ENCODE measurements at regions of chr2 and their contacts with region 1.

Region 1: DNA sequence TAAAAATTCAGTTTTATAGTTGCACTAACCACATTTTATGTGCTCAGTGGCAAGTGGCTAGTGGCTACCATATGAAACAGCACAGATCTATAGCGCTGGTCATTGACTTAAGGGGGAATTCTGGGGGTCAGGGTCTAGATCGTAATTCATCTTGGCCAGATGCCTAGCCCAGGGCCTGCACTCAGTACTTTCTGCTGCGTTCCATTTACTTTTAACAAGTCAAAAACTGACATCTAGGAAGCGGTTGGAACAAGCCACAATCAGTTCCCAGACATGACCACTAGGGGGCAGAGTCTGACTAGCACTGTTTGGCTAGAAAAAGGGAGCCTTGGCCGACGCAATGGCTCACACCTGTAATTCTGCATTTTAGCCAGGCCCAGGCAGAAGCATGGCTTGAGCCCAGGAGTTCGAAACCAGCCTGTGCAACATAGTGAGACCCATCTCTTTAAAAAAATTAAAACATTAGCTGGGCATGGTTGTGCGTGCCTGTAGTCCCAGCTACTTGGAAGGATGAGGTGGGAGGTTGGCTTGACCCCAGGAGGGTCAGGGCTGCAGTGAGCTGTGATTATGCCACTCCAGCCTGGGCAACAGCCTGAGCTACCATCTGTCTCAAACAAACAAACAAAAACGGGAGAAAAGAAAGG is 9.0 kb upstream of the TMBIM1 start:
- DNase-seq: peak; percentile 48 to 90
- ATAC-seq: peak; percentile 88 to 93
- H3K4me3 ChIP-seq: no peak overlapping the region
- H3K27ac ChIP-seq: peak overlapping the region in 1 of 2 experiments; percentile 37; a peak in 1 of 6 replicates
- H3K4me1 ChIP-seq: no peaks in the 10 kb centered on the region
- CTCF ChIP-seq: peak; percentile 93
- EP300 ChIP-seq: no peak
- POLR2A ChIP-seq: no peak
- RAD21 ChIP-seq: peak; percentile 95 to 96

Region 2: DNA sequence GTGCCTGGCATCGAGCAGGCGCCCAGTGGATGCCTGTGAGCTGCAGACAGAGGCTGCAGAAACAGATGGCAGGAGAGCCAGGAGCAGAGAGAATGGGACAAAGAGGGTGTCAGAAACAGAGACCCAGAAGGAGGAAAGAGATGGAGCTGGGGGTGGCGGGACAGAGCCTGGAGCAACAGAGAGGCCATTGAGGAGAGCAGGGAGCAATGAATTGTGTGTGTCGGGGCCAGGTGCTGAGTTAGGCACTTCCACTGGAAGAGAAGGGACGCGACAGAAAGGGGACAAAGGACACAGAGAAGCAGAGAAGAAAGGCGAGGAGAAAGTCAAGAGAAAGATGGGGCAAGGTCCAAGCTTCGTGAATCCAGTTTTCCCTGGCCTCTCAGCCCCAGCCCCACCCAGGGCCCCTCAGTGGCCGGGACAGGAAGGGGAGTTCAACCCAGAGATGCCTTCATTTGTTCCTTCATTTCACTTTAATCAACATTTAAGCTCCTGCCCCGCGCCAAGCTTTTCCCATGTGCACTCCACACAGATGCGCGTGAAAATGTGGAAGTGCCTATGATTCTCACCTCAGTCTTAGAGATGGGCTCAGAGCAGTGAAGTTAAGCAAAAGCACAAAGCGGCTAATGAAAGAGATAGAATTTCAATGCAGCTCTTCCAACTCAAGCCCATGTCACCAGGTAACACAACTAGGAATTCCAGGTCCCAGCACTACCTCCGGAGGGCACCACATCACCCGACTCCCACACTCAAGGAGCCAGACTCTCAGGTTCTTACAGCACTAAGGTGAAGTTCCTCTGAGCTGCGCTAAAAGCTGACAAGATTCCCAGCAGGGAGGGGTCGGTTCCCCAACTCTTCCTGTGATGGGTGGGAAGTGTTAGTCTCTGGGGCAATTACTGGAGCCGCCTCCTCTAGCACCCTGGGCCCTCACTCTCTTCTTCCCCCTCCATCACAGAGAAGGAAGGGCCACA is 353.6 kb before region 1 on chr2:
- CTCF ChIA-PET with region 1: no interaction called
- POLR2A ChIA-PET with region 1: no interaction called
- DNase-seq: no peak
- ATAC-seq: no peak
- H3K4me3 ChIP-seq: no peak overlapping the region
- H3K27ac ChIP-seq: no peak overlapping the region
- H3K4me1 ChIP-seq: peaks cover 35% of the 10 kb centered on the region
- CTCF ChIP-seq: no peak; the same call in 2 of the 3 replicates
- EP300 ChIP-seq: no peak
- POLR2A ChIP-seq: no peak
- RAD21 ChIP-seq: no peak

Region 3: DNA sequence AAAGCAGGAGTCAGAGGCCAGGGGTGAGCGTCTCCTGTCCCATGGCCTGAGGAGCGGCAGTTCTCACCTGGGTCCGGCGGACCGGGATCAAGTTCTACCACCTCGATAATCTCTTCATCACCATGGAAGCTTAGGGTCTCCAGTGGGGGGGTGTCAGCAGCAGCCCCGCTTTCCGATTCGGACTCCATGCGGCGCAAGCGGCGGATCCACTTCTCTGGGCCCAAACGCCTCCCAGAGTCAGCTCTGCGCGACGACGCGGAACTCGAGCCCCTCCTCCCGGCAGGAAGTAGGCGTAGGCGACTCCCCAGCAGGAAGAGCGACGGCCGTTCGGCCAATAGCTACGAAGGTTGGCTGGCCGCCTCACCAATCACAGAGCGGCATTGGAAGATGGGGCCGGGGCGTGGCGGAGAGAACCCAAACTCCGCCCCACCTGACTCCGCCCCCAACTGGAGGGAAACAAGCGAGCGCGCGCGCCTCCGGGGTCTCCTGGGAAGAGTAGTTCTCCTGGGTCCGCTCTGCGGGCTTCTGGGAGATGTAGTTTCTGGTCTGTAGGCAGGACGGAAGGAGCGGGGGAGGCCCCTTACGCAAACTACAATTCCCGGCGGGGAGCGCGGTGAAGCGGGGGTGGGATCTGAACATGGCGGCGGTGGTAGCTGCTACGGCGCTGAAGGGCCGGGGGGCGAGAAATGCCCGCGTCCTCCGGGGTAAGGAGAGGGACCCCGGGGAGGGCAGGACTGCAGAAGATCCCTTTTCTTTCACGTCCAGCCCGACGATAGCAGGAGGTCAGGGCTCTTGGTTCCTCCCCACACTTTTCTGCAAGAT is 31.2 kb before region 1 on chr2 and contains the starts of genes AAMP and PNKD:
- CTCF ChIA-PET with region 1: interaction called, 19 read pairs
- POLR2A ChIA-PET with region 1: no interaction called
- DNase-seq: peak; percentile 97 to 99
- ATAC-seq: peak; percentile 88 to 93
- H3K4me3 ChIP-seq: peak within 1 kb of the TSS; percentile 97
- H3K27ac ChIP-seq: peak within 1 kb of the TSS; percentile 90 to 92
- H3K4me1 ChIP-seq: peaks cover 25% of the 10 kb centered on the region
- CTCF ChIP-seq: no peak
- EP300 ChIP-seq: no peak
- POLR2A ChIP-seq: peak; percentile 75
- RAD21 ChIP-seq: no peak
- polyA plus RNA-seq, gene AAMP: 71.3 and 82.0 TPM in 2 replicates
- polyA plus RNA-seq, gene PNKD: 46.2 and 52.6 TPM in 2 replicates

Region 4: GRCh38 chr2:218286570-218287459 is 14.5 kb before region 1 on chr2:
- CTCF ChIA-PET with region 1: interaction called, 21 read pairs
- POLR2A ChIA-PET with region 1: no interaction called
- DNase-seq: peak; percentile 91
- ATAC-seq: peak; percentile 88 to 92
- H3K4me3 ChIP-seq: peak overlapping the region; percentile 20; the same call in 2 of the 3 replicates
- H3K27ac ChIP-seq: peak overlapping the region; percentile 64 to 87
- H3K4me1 ChIP-seq: peaks cover 56% of the 10 kb centered on the region
- CTCF ChIP-seq: no peak
- EP300 ChIP-seq: no peak
- POLR2A ChIP-seq: no peak
- RAD21 ChIP-seq: no peak

Region 5: GRCh38 chr2:218317232-218317630 is 15.9 kb after region 1 on chr2:
- CTCF ChIA-PET with region 1: interaction called, 22 read pairs
- POLR2A ChIA-PET with region 1: no interaction called
- DNase-seq: no peak
- ATAC-seq: peak in 1 of 2 experiments; percentile 9; a peak in 1 of 6 replicates
- H3K4me3 ChIP-seq: no peak overlapping the region
- H3K27ac ChIP-seq: peak overlapping the region in 1 of 2 experiments; percentile 47; a peak in 3 of 6 replicates
- H3K4me1 ChIP-seq: peaks cover 34% of the 10 kb centered on the region
- CTCF ChIP-seq: no peak
- EP300 ChIP-seq: no peak
- POLR2A ChIP-seq: no peak
- RAD21 ChIP-seq: no peak

Region 6: GRCh38 chr2:218322895-218323808 is 21.9 kb after region 1 on chr2:
- CTCF ChIA-PET with region 1: interaction called, 22 read pairs
- POLR2A ChIA-PET with region 1: no interaction called
- DNase-seq: peak; percentile 84 to 91
- ATAC-seq: peak; percentile 80 to 85
- H3K4me3 ChIP-seq: peak overlapping the region; percentile 82
- H3K27ac ChIP-seq: peak overlapping the region; percentile 93 to 98
- H3K4me1 ChIP-seq: peaks cover 32% of the 10 kb centered on the region
- CTCF ChIP-seq: no peak
- EP300 ChIP-seq: no peak
- POLR2A ChIP-seq: peak; percentile 55
- RAD21 ChIP-seq: no peak

Region 7: GRCh38 chr2:218395797-218396687 is 94.7 kb after region 1 on chr2:
- CTCF ChIA-PET with region 1: interaction called, 21 read pairs
- POLR2A ChIA-PET with region 1: interaction called, 4 read pairs
- DNase-seq: peak; percentile 59 to 97
- ATAC-seq: peak; percentile 50 to 75
- H3K4me3 ChIP-seq: peak overlapping the region; percentile 94
- H3K27ac ChIP-seq: peak overlapping the region; percentile 98 to 100
- H3K4me1 ChIP-seq: peaks cover 29% of the 10 kb centered on the region
- CTCF ChIP-seq: peak; percentile 89
- EP300 ChIP-seq: peak in 1 of 2 experiments; percentile 24; a peak in 1 of 5 replicates
- POLR2A ChIP-seq: no peak; the same call in none of the 2 replicates
- RAD21 ChIP-seq: peak; percentile 59 to 81

Measured in A549 (cell line).